HepG2 (cell line): ENCODE measurements at regions of chr3 and their contacts with region 1.

Region 1: DNA sequence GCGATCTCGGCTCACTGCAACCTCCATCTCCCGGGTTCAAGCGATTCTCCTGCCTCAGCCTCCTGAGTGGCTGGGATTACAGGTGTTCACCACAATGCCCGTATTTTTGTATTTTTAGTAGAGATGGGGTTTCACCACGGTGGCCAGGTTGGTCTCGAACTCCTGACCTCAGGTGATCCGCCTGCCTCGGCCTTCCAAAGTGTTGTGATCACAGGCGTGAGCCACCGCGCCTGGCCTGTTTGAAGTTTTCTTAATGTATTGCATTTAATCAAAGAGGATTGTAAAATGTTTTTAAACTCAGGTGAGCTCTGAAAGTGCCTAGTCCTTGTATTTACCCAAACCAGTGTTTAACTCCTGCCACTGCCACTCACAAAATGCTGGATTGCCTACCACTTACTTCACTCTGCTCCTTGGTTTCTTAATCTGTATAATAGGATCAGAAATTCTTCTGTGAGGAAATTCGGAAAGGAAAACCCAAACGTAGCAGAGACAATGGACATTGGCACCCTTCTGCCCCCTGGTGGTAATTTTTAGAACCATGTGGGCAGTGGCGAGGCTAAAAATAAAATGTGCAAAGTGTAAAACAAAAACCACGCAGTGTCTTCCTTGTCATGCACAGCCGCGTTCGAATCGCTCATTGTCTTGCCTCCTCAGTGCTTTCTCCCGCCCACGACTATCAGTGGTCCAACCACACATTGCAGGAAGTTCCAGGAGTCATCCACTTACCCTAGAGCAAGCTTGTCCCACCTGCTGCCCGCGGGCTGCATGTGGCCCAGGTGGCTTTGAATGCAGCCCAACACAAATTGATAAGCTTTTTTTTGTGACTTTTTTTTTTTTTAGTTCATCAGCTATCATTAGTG is 27.3 kb downstream of the CEP19 start:
- DNase-seq: peak; percentile 35
- ATAC-seq: peak; percentile 76
- H3K4me3 ChIP-seq: peak overlapping the region in 1 of 3 experiments; percentile 26; a peak in 2 of 6 replicates
- H3K27ac ChIP-seq: no peak overlapping the region
- H3K4me1 ChIP-seq: peaks cover 11% of the 10 kb centered on the region; the same call in 1 of the 2 replicates
- H3K27me3 ChIP-seq: peaks cover 0 to 9% of the 10 kb centered on the region in 2 experiments; a peak in 1 of 5 replicates
- CTCF ChIP-seq: peak; percentile 84
- EP300 ChIP-seq: no peak
- POLR2A ChIP-seq: no peak
- RAD21 ChIP-seq: peak; percentile 67; the same call in 1 of the 2 replicates

Region 2: GRCh38 chr3:196378146-196378841 is 306.5 kb before region 1 on chr3:
- CTCF ChIA-PET with region 1: no interaction called
- POLR2A ChIA-PET with region 1: no interaction called
- in situ Hi-C with region 1: no loop called
- intact Hi-C with region 1: no loop called
- DNase-seq: no peak
- ATAC-seq: no peak
- H3K4me3 ChIP-seq: no peak overlapping the region
- H3K27ac ChIP-seq: no peak overlapping the region
- H3K4me1 ChIP-seq: no peaks in the 10 kb centered on the region
- H3K27me3 ChIP-seq: no peaks in the 10 kb centered on the region
- CTCF ChIP-seq: no peak
- EP300 ChIP-seq: no peak
- POLR2A ChIP-seq: no peak
- RAD21 ChIP-seq: no peak

Region 3: DNA sequence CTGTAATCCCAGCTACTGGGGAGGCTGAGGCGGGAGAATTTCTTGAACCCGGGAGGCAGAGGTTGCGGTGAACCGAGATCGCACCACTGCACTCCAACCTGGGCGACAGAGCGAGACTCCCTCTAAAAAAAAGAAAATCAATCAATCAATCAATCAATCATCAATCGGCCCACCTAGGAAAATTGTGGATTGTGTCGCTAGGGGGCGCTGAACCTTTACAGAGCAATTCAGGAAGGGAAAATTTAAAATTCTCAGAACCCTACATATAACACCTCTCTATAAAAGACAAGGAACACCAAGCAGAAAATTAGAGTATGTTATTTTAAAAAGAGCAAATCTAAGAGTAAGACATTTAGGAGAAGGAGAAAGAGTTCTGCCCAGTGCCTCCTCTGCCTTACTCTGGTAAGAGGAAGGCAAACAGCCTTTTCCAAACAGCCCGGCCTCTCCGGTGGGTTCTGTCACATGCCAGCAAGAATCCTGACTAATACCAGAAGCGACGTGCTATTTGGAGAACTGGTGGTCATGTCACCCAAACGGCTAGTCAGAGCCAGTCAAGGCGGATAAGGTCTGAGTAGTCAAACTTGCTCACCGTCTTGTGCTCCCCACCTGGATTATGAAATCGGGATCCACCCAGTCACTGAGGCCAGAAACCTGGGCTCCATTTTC is 147.3 kb before region 1 on chr3:
- CTCF ChIA-PET with region 1: no interaction called
- POLR2A ChIA-PET with region 1: no interaction called
- in situ Hi-C with region 1: loop called (anchors 10 kb)
- intact Hi-C with region 1: no loop called
- DNase-seq: no peak
- ATAC-seq: peak; percentile 30; the same call in 1 of the 3 replicates
- H3K4me3 ChIP-seq: peak overlapping the region in 1 of 3 experiments; percentile 40; a peak in 1 of 6 replicates
- H3K27ac ChIP-seq: no peak overlapping the region
- H3K4me1 ChIP-seq: peaks cover 9% of the 10 kb centered on the region; the same call in 1 of the 2 replicates
- H3K27me3 ChIP-seq: no peaks in the 10 kb centered on the region; a peak in 1 of 5 replicates
- CTCF ChIP-seq: peak; percentile 57
- EP300 ChIP-seq: no peak
- POLR2A ChIP-seq: no peak
- RAD21 ChIP-seq: no peak

Region 4: DNA sequence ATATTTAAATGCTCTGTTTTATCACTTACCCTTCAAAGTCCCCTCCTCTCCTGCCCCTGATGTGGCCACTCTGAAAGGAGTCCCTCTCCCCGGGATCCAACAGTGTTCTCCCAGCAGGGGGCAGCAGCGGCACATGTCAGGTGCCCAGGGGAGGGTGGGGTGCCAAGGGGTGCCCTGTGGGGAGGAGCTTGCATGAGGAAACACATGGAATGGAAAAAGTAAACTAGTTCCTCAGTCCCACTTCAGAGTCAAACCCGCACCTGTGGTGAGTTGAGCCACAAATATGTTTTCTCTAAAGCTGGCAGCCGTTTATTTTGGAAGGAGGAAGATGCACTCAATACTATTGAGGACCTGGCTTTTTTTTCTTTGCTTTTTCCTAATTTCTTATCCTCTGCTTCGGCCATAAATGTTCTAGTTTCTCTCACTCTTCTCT is 75.4 kb before region 1 on chr3:
- CTCF ChIA-PET with region 1: interaction called, 59 read pairs
- POLR2A ChIA-PET with region 1: no interaction called
- in situ Hi-C with region 1: loop called (anchors 5 kb)
- intact Hi-C with region 1: loop called (anchors 1 kb)
- DNase-seq: peak; percentile 64
- ATAC-seq: peak; percentile 99
- H3K4me3 ChIP-seq: no peak overlapping the region
- H3K27ac ChIP-seq: no peak overlapping the region
- H3K4me1 ChIP-seq: peaks cover 11% of the 10 kb centered on the region
- H3K27me3 ChIP-seq: peaks cover 0 to 24% of the 10 kb centered on the region in 2 experiments; a peak in 3 of 5 replicates
- CTCF ChIP-seq: peak; percentile 94
- EP300 ChIP-seq: no peak
- POLR2A ChIP-seq: no peak
- RAD21 ChIP-seq: peak; percentile 87

Region 5: GRCh38 chr3:197068077-197068476 is 383.3 kb after region 1 on chr3:
- CTCF ChIA-PET with region 1: no interaction called
- POLR2A ChIA-PET with region 1: no interaction called
- in situ Hi-C with region 1: no loop called
- intact Hi-C with region 1: no loop called
- DNase-seq: no peak
- ATAC-seq: no peak
- H3K4me3 ChIP-seq: no peak overlapping the region
- H3K27ac ChIP-seq: no peak overlapping the region
- H3K4me1 ChIP-seq: no peaks in the 10 kb centered on the region
- H3K27me3 ChIP-seq: no peaks in the 10 kb centered on the region
- CTCF ChIP-seq: no peak
- EP300 ChIP-seq: no peak
- POLR2A ChIP-seq: no peak
- RAD21 ChIP-seq: no peak